ENCODE measurements at regions of chr17 and their contacts with region 1.

Region 1: GRCh38 chr17:32783602-32784001 is 93.3 kb downstream of the MYO1D start:
- H3K4me3 Mint-ChIP-seq: no peak overlapping the region
- H3K27ac Mint-ChIP-seq: no peak overlapping the region
- H3K4me1 Mint-ChIP-seq: no peaks in the 10 kb centered on the region
- H3K27me3 Mint-ChIP-seq: peaks cover 12% of the 10 kb centered on the region

Region 2: DNA sequence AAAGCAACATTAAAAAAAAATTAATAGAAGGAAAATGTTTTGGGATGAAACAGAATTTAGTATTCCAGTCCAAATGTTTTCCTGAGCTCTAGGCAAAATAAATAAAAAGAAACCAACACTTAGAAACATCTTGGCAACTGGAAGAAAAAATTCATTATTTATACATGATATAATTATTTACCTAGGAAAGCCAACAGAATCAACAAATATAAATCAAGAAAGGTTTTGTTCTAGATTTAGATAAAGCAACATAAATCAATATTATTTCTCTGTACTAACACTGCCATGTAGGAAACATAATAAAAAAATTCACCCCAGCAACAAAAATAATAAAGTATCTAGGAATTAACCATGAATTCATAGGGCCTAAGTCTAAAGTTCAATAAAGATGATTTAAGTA is 74.0 kb before region 1 on chr17:
- intact Hi-C with region 1: no loop called
- H3K4me3 Mint-ChIP-seq: no peak overlapping the region
- H3K27ac Mint-ChIP-seq: no peak overlapping the region
- H3K4me1 Mint-ChIP-seq: no peaks in the 10 kb centered on the region
- H3K27me3 Mint-ChIP-seq: no peaks in the 10 kb centered on the region

Region 3: DNA sequence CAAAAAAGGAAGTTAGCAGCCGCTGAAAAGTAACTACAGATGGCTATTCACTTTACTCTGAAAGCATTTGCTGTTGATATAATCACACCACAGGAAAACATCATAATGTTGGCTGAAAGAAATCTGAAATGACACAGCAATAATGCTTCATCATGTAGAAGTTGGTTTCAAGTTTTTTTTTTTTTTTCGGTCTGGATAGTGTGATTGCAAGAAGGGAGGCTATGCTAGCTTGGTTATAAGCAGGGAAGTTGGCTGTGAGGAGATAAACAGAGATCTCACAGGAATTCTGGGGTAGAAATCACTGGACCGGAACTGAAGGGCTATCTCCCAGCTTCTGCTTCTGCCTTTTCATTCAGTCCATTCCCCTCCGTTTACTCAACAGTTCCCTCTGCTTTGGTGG is 35.4 kb after region 1 on chr17:
- intact Hi-C with region 1: no loop called
- H3K4me3 Mint-ChIP-seq: no peak overlapping the region
- H3K27ac Mint-ChIP-seq: no peak overlapping the region
- H3K4me1 Mint-ChIP-seq: peaks cover 13% of the 10 kb centered on the region
- H3K27me3 Mint-ChIP-seq: peaks cover 14% of the 10 kb centered on the region

Region 4: GRCh38 chr17:32877164-32877764 is 93.7 kb after region 1 on chr17:
- intact Hi-C with region 1: loop called (anchors 1 kb)
- H3K4me3 Mint-ChIP-seq: peak overlapping the region; percentile 67
- H3K27ac Mint-ChIP-seq: no peak overlapping the region
- H3K4me1 Mint-ChIP-seq: peaks cover 12% of the 10 kb centered on the region
- H3K27me3 Mint-ChIP-seq: peaks cover 57% of the 10 kb centered on the region

Region 5: GRCh38 chr17:32909787-32910369 is 126.3 kb after region 1 on chr17:
- intact Hi-C with region 1: loop called (anchors 1 kb)
- H3K4me3 Mint-ChIP-seq: no peak overlapping the region
- H3K27ac Mint-ChIP-seq: no peak overlapping the region
- H3K4me1 Mint-ChIP-seq: no peaks in the 10 kb centered on the region
- H3K27me3 Mint-ChIP-seq: peaks cover 11% of the 10 kb centered on the region

Region 6: GRCh38 chr17:32936894-32937500 is 153.4 kb after region 1 on chr17:
- intact Hi-C with region 1: loop called (anchors 1 kb)
- H3K4me3 Mint-ChIP-seq: no peak overlapping the region
- H3K27ac Mint-ChIP-seq: no peak overlapping the region
- H3K4me1 Mint-ChIP-seq: no peaks in the 10 kb centered on the region
- H3K27me3 Mint-ChIP-seq: peaks cover 6% of the 10 kb centered on the region

Region 7: DNA sequence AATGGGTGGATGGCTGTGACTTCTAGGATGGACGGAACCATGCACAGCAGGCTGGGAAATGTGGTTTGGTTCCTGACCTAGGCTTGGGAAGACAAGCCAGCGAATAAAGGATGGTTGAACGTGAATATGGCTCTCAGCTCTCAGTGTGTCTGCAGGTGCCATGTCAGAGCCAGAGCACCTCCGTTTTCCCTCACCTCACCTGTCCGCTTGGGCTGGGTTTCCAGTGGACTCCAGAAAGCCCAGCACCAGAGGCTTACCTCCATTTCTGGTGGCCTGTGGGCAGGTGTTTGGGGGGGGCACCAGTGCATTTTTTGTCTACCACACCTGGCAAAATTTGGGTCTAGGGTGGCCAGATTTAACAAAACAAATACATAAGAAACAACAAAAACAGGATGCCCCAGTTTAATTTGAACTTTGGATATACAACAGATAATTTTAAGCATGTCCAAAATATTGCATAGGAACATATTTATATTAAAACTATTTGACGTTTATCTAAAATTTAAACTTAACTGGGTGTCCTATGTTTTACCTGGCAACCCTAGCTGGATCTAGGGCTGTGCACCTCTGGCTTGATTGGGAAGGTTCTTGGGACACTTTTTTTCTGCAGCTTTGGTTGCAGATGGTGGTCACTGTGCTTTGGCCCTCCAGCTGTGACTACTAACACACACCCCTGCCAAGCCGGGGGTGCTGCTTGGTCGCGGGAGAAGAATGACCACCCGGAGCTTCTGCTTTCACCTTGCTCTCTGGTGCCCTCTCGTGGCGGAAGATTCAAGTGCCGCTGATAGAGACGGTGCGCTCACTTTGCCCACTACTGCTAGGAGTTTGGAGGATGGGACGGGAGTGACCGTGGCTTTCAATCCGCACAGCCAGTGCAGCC is 214.4 kb after region 1 on chr17:
- intact Hi-C with region 1: loop called (anchors 2 kb)
- H3K4me3 Mint-ChIP-seq: no peak overlapping the region
- H3K27ac Mint-ChIP-seq: no peak overlapping the region
- H3K4me1 Mint-ChIP-seq: peaks cover 7% of the 10 kb centered on the region
- H3K27me3 Mint-ChIP-seq: peaks cover 10% of the 10 kb centered on the region

Measured in dendritic cell treated with granulocyte-macrophage colony-stimulating factor and Interleukin-4, amounts not matched to agents 40 ng/mL and 50 ng/mL, for 4 days (primary cell).